CD4-positive, alpha-beta memory T cell (primary cell): ENCODE measurements at regions of chr5 and their contacts with region 1.

Region 1: DNA sequence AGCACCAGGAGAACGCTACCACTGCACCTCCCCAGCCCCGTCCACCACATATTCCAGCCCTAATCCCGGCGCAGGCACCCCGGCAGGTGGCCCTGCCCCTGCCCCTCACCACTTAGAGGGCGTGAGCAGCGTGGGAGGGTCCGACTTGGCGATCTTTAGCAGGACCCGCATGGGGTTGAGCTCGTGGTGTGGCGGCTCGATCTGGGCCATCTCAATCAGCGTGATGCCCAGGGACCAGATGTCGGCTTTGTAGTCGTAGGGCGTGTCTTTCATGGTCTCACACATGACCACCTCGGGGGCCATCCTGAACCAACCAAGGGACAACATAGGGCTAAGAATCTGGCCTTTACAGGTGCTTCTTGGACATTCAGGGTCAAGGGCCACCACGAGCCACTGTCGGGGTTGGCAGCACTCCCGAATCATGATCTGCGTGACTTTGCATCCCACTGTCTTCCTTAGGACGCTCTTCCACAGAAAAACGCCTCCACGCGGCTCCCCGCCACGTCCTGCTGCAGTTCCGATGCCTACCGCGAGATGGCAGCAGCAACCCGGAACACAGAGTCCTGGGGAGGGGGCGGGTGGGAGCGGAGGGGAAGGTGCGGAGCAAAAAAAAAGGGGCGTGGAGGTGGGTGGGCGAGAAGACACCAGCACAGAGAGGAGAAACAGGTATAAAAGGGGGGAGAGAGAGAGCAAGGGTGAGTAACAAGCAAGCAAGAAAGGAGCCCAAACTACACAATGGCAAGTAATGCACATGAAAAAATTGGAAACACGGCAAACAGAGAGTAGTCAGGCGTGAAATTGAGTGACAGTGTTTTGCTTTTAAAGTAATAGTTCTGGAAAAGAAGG is 81.3 kb downstream of the STK10 start:
- DNase-seq: peak; percentile 49 to 67 (median 56)
- H3K4me3 ChIP-seq: no peak overlapping the region
- H3K4me3 Mint-ChIP-seq: peak overlapping the region in 4 of 8 donors; percentile 45 to 65 (median 52)
- H3K27ac ChIP-seq: peak overlapping the region; percentile 36
- H3K27ac Mint-ChIP-seq: peak overlapping the region; percentile 77 to 93 (median 87)
- H3K4me1 ChIP-seq: peaks cover 43% of the 10 kb centered on the region
- H3K4me1 Mint-ChIP-seq: peaks cover 21 to 65% (median 37%) of the 10 kb centered on the region in 4 donors
- H3K27me3 ChIP-seq: no peaks in the 10 kb centered on the region
- H3K27me3 Mint-ChIP-seq: no peaks in the 10 kb centered on the region

Region 2: DNA sequence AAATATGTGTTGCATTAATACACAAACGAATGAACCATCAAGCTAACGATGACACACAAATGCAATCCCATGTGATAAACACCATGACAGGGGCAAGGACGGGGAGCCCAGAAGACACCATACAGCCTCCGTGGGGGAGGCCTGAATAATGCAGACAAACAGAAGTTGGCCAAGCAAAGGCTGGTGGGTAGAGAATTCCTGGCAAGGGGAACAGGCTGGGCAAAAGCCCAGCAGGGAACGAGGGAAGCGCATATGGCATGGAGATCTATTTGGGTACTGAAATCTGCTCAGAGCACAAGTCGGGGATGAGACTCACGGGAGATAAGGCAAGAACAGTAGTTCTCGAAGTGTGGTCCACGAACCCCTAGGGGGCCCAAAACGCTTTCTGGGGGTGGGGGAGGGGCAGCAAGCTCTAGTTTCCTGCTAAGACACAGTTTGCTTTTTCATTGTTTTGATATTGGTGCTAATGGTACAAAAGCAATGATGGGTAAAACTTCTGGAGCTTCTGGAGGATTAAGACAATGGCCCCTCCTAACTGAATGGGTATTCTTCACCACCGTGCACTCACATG is 57.4 kb before region 1 on chr5:
- CTCF ChIA-PET with region 1: no interaction called
- POLR2A ChIA-PET with region 1: no interaction called
- intact Hi-C with region 1: no loop called
- DNase-seq: no peak
- H3K4me3 ChIP-seq: no peak overlapping the region
- H3K4me3 Mint-ChIP-seq: no peak overlapping the region
- H3K27ac ChIP-seq: no peak overlapping the region
- H3K27ac Mint-ChIP-seq: peak overlapping the region in 4 of 7 donors; percentile 53 to 90 (median 62)
- H3K4me1 ChIP-seq: no peaks in the 10 kb centered on the region
- H3K4me1 Mint-ChIP-seq: peaks cover 4 to 12% (median 7%) of the 10 kb centered on the region in 4 donors
- H3K27me3 ChIP-seq: no peaks in the 10 kb centered on the region
- H3K27me3 Mint-ChIP-seq: no peaks in the 10 kb centered on the region

Region 3: DNA sequence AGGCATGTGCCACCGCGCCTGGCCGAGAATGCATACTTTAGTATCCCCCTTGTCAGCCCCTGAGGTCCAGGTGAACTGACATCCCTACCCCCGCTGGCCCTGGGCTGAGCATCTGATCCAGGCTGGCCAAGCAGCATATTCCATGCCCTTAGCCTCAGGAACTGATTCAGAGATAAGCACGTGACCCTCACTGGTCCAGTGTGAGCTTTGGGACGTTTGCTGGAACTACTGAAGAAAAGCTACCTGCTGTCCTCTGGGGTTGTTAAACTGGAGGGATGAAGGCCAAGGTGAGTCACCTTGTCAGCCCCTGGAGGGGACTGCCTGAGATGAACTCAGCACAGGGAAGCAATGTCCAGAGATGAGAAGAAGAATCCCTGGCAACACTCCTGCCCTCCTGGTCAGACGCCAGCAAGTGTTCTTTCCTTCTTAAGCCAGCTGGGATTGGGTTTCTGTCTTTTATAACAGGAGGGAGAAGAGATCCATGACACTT is 41.2 kb before region 1 on chr5:
- CTCF ChIA-PET with region 1: interaction called, 4 read pairs
- POLR2A ChIA-PET with region 1: interaction called, 9 read pairs
- intact Hi-C with region 1: loop called (anchors 2 kb)
- DNase-seq: no peak
- H3K4me3 ChIP-seq: no peak overlapping the region
- H3K4me3 Mint-ChIP-seq: peak overlapping the region in 5 of 8 donors; percentile 4 to 86 (median 80)
- H3K27ac ChIP-seq: peak overlapping the region; percentile 62
- H3K27ac Mint-ChIP-seq: peak overlapping the region in 5 of 7 donors; percentile 29 to 98 (median 95)
- H3K4me1 ChIP-seq: peaks cover 68% of the 10 kb centered on the region
- H3K4me1 Mint-ChIP-seq: peaks cover 46 to 79% (median 60%) of the 10 kb centered on the region in 4 donors
- H3K27me3 ChIP-seq: no peaks in the 10 kb centered on the region
- H3K27me3 Mint-ChIP-seq: no peaks in the 10 kb centered on the region

Region 4: DNA sequence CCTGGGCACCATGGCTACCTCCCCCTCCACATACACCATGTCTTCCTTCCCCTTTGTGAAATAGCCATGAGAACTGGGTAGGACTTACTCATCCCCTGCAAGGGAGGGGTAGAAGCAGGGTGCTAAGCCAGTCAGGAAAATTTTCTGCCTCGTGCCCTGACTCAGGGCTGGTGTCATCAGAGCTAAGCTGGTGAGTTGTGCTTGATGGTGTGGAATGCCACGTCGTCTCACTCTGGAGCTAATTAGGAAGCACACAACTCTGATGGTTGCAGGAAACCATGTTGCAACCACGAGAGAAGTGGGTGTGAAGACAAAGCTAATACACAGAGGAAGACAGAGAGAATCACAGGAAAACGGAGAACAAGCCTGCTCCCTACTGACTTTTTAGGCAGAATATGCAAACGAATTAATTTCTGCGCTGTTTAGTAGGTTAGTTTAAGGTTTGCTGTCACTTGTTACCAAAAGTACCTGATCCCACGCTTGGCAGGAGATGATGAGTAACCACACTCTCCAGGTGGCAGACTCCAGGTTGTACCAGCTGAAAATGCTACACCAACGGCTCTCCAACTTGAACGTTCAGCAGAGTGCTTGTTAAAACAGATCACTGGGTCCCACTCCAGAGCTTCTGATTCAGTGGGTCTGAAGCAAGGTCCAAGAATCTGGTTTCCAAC is 26.8 kb after region 1 on chr5:
- CTCF ChIA-PET with region 1: interaction called, 10 read pairs
- POLR2A ChIA-PET with region 1: interaction called, 10 read pairs
- intact Hi-C with region 1: no loop called
- DNase-seq: peak in 4 of 5 donors; percentile 12 to 66 (median 18)
- H3K4me3 ChIP-seq: peak overlapping the region; percentile 2 to 10
- H3K4me3 Mint-ChIP-seq: peak overlapping the region; percentile 33 to 73 (median 58)
- H3K27ac ChIP-seq: peak overlapping the region; percentile 14
- H3K27ac Mint-ChIP-seq: peak overlapping the region; percentile 50 to 94 (median 86)
- H3K4me1 ChIP-seq: peaks cover 64% of the 10 kb centered on the region
- H3K4me1 Mint-ChIP-seq: peaks cover 47 to 76% (median 61%) of the 10 kb centered on the region in 4 donors
- H3K27me3 ChIP-seq: no peaks in the 10 kb centered on the region
- H3K27me3 Mint-ChIP-seq: no peaks in the 10 kb centered on the region

Region 5: GRCh38 chr5:172150514-172151425 is 44.0 kb after region 1 on chr5:
- CTCF ChIA-PET with region 1: interaction called, 5 read pairs
- POLR2A ChIA-PET with region 1: interaction called, 3 read pairs
- intact Hi-C with region 1: loop called (anchors 5 kb)
- DNase-seq: peak in 4 of 5 donors; percentile 14 to 37 (median 26)
- H3K4me3 ChIP-seq: peak overlapping the region in 1 of 2 donors; percentile 48
- H3K4me3 Mint-ChIP-seq: peak overlapping the region; percentile 36 to 79 (median 73)
- H3K27ac ChIP-seq: peak overlapping the region; percentile 55
- H3K27ac Mint-ChIP-seq: peak overlapping the region; percentile 89 to 97 (median 94)
- H3K4me1 ChIP-seq: peaks cover 88% of the 10 kb centered on the region
- H3K4me1 Mint-ChIP-seq: peaks cover 54 to 91% (median 74%) of the 10 kb centered on the region in 4 donors
- H3K27me3 ChIP-seq: no peaks in the 10 kb centered on the region
- H3K27me3 Mint-ChIP-seq: no peaks in the 10 kb centered on the region

Region 6: GRCh38 chr5:172283020-172283861 is 176.5 kb after region 1 on chr5 and contains the start of gene UBTD2:
- CTCF ChIA-PET with region 1: interaction called, 10 read pairs
- POLR2A ChIA-PET with region 1: no interaction called
- intact Hi-C with region 1: loop called (anchors 1 kb)
- DNase-seq: peak; percentile 72 to 82 (median 76)
- H3K4me3 ChIP-seq: peak within 1 kb of the TSS; percentile 47 to 71
- H3K4me3 Mint-ChIP-seq: peak within 1 kb of the TSS; percentile 89 to 93 (median 91)
- H3K27ac ChIP-seq: peak within 1 kb of the TSS; percentile 62
- H3K27ac Mint-ChIP-seq: peak within 1 kb of the TSS; percentile 80 to 96 (median 87)
- H3K4me1 ChIP-seq: peaks cover 26% of the 10 kb centered on the region
- H3K4me1 Mint-ChIP-seq: peaks cover 14 to 34% (median 21%) of the 10 kb centered on the region in 4 donors
- H3K27me3 ChIP-seq: no peaks in the 10 kb centered on the region
- H3K27me3 Mint-ChIP-seq: no peaks in the 10 kb centered on the region
- total RNA-seq, gene UBTD2: 6.3 TPM